ENCODE measurements at regions of chr17 and their contacts with region 1.

Region 1: DNA sequence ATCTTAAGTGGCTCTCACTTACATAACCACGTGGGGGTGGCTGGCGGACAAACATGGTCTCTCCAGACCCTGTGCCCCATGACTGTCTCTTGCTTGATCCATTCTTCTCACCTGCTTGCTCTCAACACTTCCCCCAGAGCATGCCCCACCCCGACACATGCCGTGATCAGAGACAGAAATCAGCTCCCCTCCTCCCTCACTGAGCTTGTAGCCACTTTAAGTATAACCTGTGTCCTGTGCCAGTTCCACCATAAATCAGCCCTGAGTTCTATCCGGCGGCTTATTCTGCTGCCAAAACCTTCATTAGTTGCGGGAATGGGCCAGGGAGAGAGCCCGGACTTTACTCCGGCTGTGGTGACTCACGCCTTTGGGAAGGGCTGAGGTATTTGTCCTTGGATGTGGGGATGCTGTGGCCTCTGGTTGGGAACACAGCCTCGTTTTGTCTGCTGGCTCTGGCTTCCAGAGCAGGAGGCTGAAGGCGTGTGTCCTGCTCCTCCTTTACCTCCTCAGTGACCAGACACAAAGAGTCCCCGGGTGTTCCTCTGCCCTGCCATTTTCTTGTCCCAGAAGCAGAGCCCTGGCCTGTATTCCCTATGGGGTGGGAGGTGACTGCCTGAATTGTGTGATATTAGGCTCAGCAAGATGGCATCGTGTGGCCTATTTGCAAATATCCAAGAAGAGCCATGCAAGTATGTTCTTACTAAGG is 21.1 kb downstream of the ANKRD40 start:
- DNase-seq: peak; percentile 81 to 83 (median 82)
- ATAC-seq: peak; percentile 77 to 82
- H3K4me3 ChIP-seq: no peak overlapping the region
- H3K27ac ChIP-seq: peak overlapping the region; percentile 82
- H3K4me1 ChIP-seq: peaks cover 5% of the 10 kb centered on the region
- H3K27me3 ChIP-seq: no peaks in the 10 kb centered on the region

Region 2: DNA sequence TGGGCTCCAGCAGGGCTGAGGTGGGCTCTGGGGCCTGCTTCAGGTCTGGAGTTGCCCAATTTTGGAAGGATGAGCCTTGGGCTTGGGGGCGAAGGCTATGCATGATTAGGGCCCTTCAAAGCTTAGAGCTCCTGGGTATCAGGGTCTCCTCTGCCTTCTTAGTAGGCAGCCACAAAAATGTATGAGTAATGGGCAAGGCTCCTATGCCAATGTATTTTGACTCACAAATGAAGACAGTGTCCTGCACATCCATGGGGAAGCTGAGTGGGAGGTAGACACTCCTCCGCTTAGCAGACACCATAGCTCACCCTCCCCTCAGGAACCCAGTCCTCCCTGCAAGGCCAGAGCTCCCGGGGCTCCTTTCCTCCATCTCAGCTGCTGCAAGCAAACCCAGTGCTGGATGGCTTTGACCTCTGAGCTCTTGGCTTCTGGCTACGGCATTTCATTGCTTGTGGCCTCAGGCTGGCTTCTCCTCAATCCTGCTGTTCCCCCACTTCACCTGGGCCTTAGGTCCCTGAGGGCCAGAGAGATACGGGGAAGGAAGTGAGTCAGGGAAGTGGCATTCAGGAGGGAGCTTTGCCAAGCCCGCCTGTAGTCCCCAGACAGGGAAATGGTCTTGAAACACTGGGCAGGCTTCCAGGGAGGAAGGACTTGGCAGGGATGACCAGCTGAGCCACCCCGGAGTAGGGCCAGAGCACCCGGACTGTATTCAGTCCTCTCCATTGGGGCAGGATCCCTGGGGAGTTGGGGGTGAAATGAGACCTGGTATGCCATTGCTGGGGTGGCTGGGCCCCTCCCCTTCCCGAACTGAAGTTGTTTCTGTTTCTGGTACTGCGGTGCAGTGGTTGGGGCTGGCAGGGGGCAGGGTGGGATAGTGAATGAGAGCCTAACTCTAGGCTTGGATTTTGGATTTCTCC is 47.5 kb before region 1 on chr17:
- intact Hi-C with region 1: loop called in 2 of 4 experiments (anchors 5 kb)
- DNase-seq: peak; percentile 94
- ATAC-seq: peak; percentile 85 to 87
- H3K4me3 ChIP-seq: no peak overlapping the region
- H3K27ac ChIP-seq: no peak overlapping the region
- H3K4me1 ChIP-seq: peaks cover 12% of the 10 kb centered on the region
- H3K27me3 ChIP-seq: no peaks in the 10 kb centered on the region

Region 3: DNA sequence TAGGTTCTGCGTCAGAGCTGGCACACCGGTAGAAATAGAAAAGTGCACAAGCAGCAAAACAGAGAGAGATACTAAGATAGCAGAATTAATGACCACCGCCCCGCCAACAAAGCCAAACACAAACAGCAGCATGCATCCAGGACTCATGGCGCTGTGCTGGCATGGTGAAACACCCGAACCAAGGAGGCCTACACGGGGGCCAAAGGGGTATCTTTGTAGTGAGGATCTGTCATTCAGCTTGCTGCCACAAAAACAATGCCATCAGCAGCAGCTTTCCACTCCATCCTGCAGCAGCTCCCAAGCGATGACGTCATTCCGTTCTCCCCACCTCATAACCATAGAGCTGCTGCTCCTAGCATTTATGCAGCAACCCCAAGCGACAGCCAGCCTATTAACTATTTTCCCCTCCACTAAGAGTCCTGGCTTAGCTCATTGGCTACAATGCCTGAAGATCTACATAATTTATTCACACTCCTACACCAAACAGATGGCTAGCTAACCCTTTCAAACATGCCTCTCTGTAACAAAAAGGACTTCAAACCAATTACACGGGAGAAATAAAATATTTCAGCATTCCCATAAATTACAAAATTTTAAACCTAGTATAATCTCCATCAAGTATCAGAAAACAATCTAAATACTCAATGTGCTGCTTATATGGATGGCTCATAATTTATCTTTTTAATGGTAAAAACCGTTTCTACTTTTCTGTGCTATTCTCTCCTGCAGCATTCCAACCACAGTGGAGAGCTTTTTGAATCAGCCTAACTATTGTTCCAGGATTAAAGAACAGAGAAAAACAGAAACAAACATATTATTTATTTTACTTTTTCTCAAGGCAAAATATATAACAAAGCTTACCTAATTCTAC is 360.1 kb after region 1 on chr17:
- intact Hi-C with region 1: no loop called
- DNase-seq: peak; percentile 72 to 81 (median 78)
- ATAC-seq: peak; percentile 97 to 98
- H3K4me3 ChIP-seq: peak overlapping the region; percentile 1
- H3K27ac ChIP-seq: peak overlapping the region; percentile 32
- H3K4me1 ChIP-seq: peaks cover 2% of the 10 kb centered on the region
- H3K27me3 ChIP-seq: no peaks in the 10 kb centered on the region

Measured in right cardiac atrium (tissue), 5 donors.